ENCODE measurements at regions of chr1 and their contacts with region 1.

Region 1: DNA sequence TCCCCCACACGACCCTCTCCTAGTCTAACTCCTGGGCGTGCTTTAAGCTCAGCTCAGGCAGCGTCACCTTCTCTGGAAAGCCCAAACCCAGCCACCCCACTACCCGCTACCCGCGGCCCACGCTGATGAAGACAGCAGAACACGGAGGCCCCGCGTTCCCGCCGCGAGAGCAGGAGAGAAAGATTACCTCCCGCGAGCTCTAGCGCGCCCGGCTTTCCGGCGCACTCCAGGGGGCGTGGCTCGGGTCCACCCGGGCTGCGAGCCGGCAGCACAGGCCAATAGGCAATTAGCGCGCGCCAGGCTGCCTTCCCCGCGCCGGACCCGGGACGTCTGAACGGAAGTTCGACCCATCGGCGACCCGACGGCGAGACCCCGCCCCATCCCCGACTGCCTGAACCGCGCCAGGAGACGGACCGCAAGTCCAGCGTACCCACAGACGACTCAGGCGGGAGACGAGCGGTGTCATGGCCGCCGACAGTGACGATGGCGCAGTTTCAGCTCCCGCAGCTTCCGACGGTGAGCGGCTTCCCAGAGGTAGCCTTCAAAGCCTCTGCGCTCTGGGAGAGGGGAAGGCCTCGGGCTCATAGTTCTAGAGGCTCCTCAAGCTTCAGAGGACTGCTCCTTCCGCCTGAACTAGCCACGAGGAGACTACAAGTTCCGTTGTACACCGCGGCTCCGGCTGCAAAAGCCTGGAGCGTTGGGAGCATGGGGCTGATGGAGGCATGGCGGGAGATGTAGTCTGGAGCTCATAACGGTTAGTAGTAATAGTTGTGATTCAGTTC is at the starts of genes MUTYH and TOE1:
- DNase-seq: peak; percentile 82 to 92
- ATAC-seq: peak; percentile 91 to 94
- H3K4me3 ChIP-seq: peak within 1 kb of the TSS; percentile 67
- H3K27ac ChIP-seq: peak within 1 kb of the TSS; percentile 96 to 97
- H3K4me1 ChIP-seq: peaks cover 18% of the 10 kb centered on the region; the same call in 2 of the 3 replicates
- CTCF ChIP-seq: no peak
- EP300 ChIP-seq: no peak
- POLR2A ChIP-seq: peak; percentile 78
- RAD21 ChIP-seq: no peak
- polyA plus RNA-seq, gene MUTYH: 9.0 and 9.4 TPM in 2 replicates
- polyA plus RNA-seq, gene TOE1: 13.3 and 14.9 TPM in 2 replicates

Region 2: GRCh38 chr1:45303582-45304310 is 36.2 kb before region 1 on chr1:
- CTCF ChIA-PET with region 1: interaction called, 7 read pairs
- POLR2A ChIA-PET with region 1: interaction called, 33 read pairs
- DNase-seq: peak; percentile 87 to 95
- ATAC-seq: peak; percentile 94 to 95
- H3K4me3 ChIP-seq: peak overlapping the region; percentile 64
- H3K27ac ChIP-seq: peak overlapping the region; percentile 94 to 99
- H3K4me1 ChIP-seq: peaks cover 7% of the 10 kb centered on the region
- CTCF ChIP-seq: peak; percentile 76
- EP300 ChIP-seq: no peak
- POLR2A ChIP-seq: peak; percentile 56
- RAD21 ChIP-seq: peak; percentile 66 to 77

Region 3: DNA sequence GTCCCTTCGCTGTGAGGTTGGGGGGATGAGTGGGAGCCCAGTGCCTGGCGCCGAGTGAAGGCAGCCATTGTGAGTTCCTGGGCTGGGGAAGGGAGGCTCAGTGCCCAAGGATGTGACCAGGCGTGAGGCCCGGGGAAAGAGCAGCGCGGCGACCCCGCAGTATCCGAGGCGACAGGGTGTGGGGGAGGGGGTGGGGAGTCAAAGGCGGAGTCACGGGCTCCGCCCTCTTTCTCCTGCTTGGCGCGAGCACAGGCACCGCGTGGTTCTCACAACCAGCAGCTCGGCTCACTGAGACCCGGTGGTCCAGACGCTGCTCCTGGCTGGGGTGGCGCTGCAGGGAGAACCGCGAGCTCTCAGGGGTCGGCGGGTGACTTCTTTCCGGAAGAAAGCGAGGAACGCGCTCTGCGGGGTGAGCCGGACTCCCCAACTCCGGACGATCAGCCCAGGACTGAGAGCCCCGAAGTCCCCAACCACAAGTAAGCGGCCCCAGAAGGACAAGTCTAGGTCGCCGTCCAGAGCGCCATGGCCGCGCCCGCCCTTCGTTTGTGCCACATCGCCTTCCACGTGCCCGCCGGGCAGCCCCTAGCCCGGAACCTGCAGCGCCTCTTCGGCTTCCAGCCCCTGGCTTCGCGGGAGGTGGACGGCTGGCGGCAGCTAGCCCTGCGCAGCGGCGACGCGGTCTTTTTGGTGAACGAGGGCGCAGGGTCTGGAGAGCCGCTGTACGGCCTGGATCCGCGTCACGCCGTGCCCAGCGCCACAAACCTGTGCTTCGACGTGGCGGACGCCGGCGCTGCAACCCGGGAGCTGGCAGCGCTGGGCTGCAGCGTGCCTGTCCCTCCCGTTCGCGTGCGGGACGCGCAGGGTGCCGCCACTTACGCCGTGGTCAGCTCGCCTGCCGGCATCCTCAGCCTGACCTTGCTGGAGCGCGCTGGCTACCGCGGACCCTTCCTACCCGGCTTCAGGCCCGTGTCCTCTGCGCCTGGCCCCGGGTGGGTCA is 13.1 kb before region 1 on chr1 and contains the start of gene HPDL:
- CTCF ChIA-PET with region 1: interaction called, 3 read pairs
- POLR2A ChIA-PET with region 1: interaction called, 29 read pairs
- DNase-seq: peak; percentile 45 to 58
- ATAC-seq: peak; percentile 80 to 85
- H3K4me3 ChIP-seq: peak within 1 kb of the TSS; percentile 49
- H3K27ac ChIP-seq: peak within 1 kb of the TSS; percentile 71 to 95
- H3K4me1 ChIP-seq: peaks cover 36% of the 10 kb centered on the region
- CTCF ChIP-seq: no peak
- EP300 ChIP-seq: no peak
- POLR2A ChIP-seq: peak; percentile 42
- RAD21 ChIP-seq: no peak
- polyA plus RNA-seq, gene HPDL: 0.80 and 0.91 TPM in 2 replicates

Region 4: GRCh38 chr1:45490626-45491486 is 150.9 kb after region 1 on chr1 and contains the start of gene TESK2:
- CTCF ChIA-PET with region 1: interaction called, 12 read pairs
- POLR2A ChIA-PET with region 1: interaction called, 12 read pairs
- DNase-seq: peak; percentile 93 to 99
- ATAC-seq: peak; percentile 92 to 97
- H3K4me3 ChIP-seq: peak within 1 kb of the TSS; percentile 57
- H3K27ac ChIP-seq: peak within 1 kb of the TSS; percentile 18 to 68; a peak in 4 of 6 replicates
- H3K4me1 ChIP-seq: no peaks in the 10 kb centered on the region; the same call in 2 of the 3 replicates
- CTCF ChIP-seq: no peak
- EP300 ChIP-seq: no peak
- POLR2A ChIP-seq: no peak
- RAD21 ChIP-seq: no peak
- polyA plus RNA-seq, gene TESK2: 0.48 and 0.58 TPM in 2 replicates

Region 5: DNA sequence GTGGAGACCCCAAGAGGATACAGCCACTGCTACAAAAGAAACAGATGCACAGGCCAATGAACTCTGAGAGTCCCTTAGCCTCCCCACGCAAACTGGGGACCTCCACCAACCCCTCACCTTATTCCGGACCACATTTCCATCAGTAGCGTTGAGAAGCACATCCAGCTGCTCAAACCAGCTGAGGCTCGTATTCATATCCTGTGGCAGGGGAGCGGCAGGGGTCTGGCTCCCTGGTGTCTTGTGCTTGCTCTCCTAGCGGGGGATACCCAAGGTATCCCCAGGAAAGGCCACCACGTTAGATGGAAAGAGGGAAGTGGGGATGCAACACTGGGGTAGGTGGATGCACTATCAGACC is 159.4 kb after region 1 on chr1:
- CTCF ChIA-PET with region 1: no interaction called
- POLR2A ChIA-PET with region 1: interaction called, 10 read pairs
- DNase-seq: no peak
- ATAC-seq: peak in 1 of 2 experiments; percentile 16; a peak in 2 of 6 replicates
- H3K4me3 ChIP-seq: peak overlapping the region; percentile 75
- H3K27ac ChIP-seq: peak overlapping the region; percentile 82 to 83
- H3K4me1 ChIP-seq: peaks cover 25% of the 10 kb centered on the region
- CTCF ChIP-seq: no peak
- EP300 ChIP-seq: no peak
- POLR2A ChIP-seq: no peak
- RAD21 ChIP-seq: no peak

Region 6: GRCh38 chr1:45521398-45522323 is 181.7 kb after region 1 on chr1 and contains the start of gene PRDX1:
- CTCF ChIA-PET with region 1: no interaction called
- POLR2A ChIA-PET with region 1: interaction called, 10 read pairs
- DNase-seq: peak; percentile 72 to 95
- ATAC-seq: peak; percentile 84 to 86
- H3K4me3 ChIP-seq: peak within 1 kb of the TSS; percentile 76
- H3K27ac ChIP-seq: peak within 1 kb of the TSS; percentile 100
- H3K4me1 ChIP-seq: peaks cover 62% of the 10 kb centered on the region
- CTCF ChIP-seq: no peak
- EP300 ChIP-seq: 0 out of 5 replicates have a peak, but pooled peaks of 1 of the 2 experiments have one; percentile 17
- POLR2A ChIP-seq: peak; percentile 99
- RAD21 ChIP-seq: no peak
- polyA plus RNA-seq, gene PRDX1: 2,329 and 2,391 TPM in 2 replicates

Measured in A549 (cell line).